Endothelial cell of umbilical vein (primary cell): ENCODE measurements at regions of chr7 and their contacts with region 1.

Region 1: GRCh38 chr7:28685644-28686417 is 272.3 kb downstream of the TRIL start:
- DNase-seq: peak; percentile 99
- H3K4me3 ChIP-seq: peak overlapping the region; percentile 45 to 94 (median 83)
- H3K27ac ChIP-seq: peak overlapping the region; percentile 97
- H3K4me1 ChIP-seq: peaks cover 29% of the 10 kb centered on the region
- H3K27me3 ChIP-seq: no peaks in the 10 kb centered on the region
- CTCF ChIP-seq: no peak
- POLR2A ChIP-seq: peak; percentile 75

Region 2: GRCh38 chr7:28298870-28299518 is 386.8 kb before region 1 on chr7:
- CTCF ChIA-PET with region 1: no interaction called
- POLR2A ChIA-PET with region 1: no interaction called
- dilution Hi-C with region 1: no loop called
- intact Hi-C with region 1: no loop called
- DNase-seq: peak; percentile 53
- H3K4me3 ChIP-seq: no peak overlapping the region
- H3K27ac ChIP-seq: no peak overlapping the region
- H3K4me1 ChIP-seq: no peaks in the 10 kb centered on the region
- H3K27me3 ChIP-seq: no peaks in the 10 kb centered on the region
- CTCF ChIP-seq: peak; percentile 36 to 48
- POLR2A ChIP-seq: no peak

Region 3: GRCh38 chr7:28378574-28379149 is 307.2 kb before region 1 on chr7:
- CTCF ChIA-PET with region 1: no interaction called
- POLR2A ChIA-PET with region 1: no interaction called
- dilution Hi-C with region 1: no loop called
- intact Hi-C with region 1: no loop called
- DNase-seq: no peak
- H3K4me3 ChIP-seq: no peak overlapping the region
- H3K27ac ChIP-seq: no peak overlapping the region
- H3K4me1 ChIP-seq: no peaks in the 10 kb centered on the region
- H3K27me3 ChIP-seq: no peaks in the 10 kb centered on the region
- CTCF ChIP-seq: no peak
- POLR2A ChIP-seq: no peak

Region 4: GRCh38 chr7:28389504-28390395 is 296.1 kb before region 1 on chr7:
- CTCF ChIA-PET with region 1: no interaction called
- POLR2A ChIA-PET with region 1: no interaction called
- dilution Hi-C with region 1: no loop called
- intact Hi-C with region 1: loop called (anchors 1 kb)
- DNase-seq: peak; percentile 76
- H3K4me3 ChIP-seq: peak overlapping the region in 2 of 3 experiments; percentile 1 to 54
- H3K27ac ChIP-seq: no peak overlapping the region
- H3K4me1 ChIP-seq: no peaks in the 10 kb centered on the region
- H3K27me3 ChIP-seq: peaks cover 10 to 13% of the 10 kb centered on the region in 2 experiments
- CTCF ChIP-seq: peak; percentile 39 to 41
- POLR2A ChIP-seq: no peak

Region 5: GRCh38 chr7:28509251-28510022 is 176.4 kb before region 1 on chr7:
- CTCF ChIA-PET with region 1: no interaction called
- POLR2A ChIA-PET with region 1: no interaction called
- dilution Hi-C with region 1: no loop called
- intact Hi-C with region 1: loop called (anchors 5 kb)
- DNase-seq: peak; percentile 73
- H3K4me3 ChIP-seq: peak overlapping the region in 2 of 3 experiments; percentile 8 to 27
- H3K27ac ChIP-seq: no peak overlapping the region
- H3K4me1 ChIP-seq: peaks cover 17% of the 10 kb centered on the region
- H3K27me3 ChIP-seq: no peaks in the 10 kb centered on the region
- CTCF ChIP-seq: no peak
- POLR2A ChIP-seq: no peak

Region 6: DNA sequence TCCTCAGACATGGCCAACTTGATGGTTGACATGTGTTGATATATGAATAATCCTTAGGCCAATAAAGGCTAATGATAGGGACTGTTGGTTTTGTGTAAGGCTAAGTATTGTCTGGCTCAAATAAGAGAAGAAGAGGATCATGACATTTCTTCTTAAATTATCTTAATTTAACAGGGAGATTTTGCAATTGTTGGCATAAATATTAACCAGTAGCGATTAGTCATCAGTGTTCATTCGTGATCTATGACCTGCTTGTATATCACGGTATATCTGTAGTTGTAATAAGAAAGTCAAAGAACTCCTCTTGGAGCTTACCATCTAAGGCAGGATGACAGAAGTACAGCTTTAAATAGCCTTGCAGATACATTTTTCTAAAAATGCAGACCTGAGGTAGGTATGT is 77.1 kb before region 1 on chr7:
- CTCF ChIA-PET with region 1: no interaction called
- POLR2A ChIA-PET with region 1: no interaction called
- dilution Hi-C with region 1: no loop called
- intact Hi-C with region 1: loop called (anchors 1 kb)
- DNase-seq: no peak
- H3K4me3 ChIP-seq: no peak overlapping the region
- H3K27ac ChIP-seq: no peak overlapping the region
- H3K4me1 ChIP-seq: peaks cover 27% of the 10 kb centered on the region
- H3K27me3 ChIP-seq: no peaks in the 10 kb centered on the region
- CTCF ChIP-seq: no peak
- POLR2A ChIP-seq: no peak

Region 7: DNA sequence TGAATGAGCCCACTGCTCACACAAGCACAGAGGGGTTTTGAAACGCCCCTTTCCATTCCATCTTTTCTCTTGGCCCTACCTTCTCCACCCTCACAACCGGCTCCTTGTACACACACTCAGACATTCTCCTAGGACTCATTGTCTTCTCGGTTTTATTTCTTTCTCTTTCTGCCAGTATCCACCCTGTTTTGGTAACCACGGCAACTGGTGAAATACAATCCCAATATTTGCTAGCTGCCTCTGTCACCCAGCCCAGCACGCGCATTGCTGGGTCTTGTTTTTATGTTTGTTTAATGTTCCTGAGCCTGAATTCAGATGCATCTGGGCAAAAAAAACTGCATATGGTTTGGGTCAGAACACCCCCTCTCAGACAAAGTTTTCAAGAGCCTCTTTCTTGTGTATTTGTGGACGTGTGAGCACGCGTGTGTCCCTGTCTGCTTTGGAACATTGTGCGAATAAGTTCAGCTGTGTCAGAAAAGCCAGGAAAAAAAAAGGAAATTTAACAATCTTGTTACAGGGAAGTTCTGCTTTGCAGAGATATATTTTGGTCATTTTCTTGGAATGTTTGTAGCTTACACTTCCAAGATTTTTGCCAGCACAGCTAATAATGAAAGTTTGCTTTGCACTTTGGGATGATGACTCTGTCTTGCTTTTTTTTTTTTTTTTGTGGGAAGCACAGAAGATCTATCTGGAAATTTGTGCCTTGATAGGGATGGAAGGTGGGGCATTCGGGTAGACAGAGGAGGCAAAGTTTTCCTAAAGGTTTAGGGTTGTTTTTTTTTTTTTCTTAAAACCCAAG is 46.4 kb after region 1 on chr7:
- CTCF ChIA-PET with region 1: no interaction called
- POLR2A ChIA-PET with region 1: no interaction called
- dilution Hi-C with region 1: no loop called
- intact Hi-C with region 1: loop called (anchors 1 kb)
- DNase-seq: peak; percentile 57
- H3K4me3 ChIP-seq: no peak overlapping the region
- H3K27ac ChIP-seq: no peak overlapping the region
- H3K4me1 ChIP-seq: peaks cover 3% of the 10 kb centered on the region
- H3K27me3 ChIP-seq: no peaks in the 10 kb centered on the region
- CTCF ChIP-seq: no peak
- POLR2A ChIP-seq: no peak

Region 8: DNA sequence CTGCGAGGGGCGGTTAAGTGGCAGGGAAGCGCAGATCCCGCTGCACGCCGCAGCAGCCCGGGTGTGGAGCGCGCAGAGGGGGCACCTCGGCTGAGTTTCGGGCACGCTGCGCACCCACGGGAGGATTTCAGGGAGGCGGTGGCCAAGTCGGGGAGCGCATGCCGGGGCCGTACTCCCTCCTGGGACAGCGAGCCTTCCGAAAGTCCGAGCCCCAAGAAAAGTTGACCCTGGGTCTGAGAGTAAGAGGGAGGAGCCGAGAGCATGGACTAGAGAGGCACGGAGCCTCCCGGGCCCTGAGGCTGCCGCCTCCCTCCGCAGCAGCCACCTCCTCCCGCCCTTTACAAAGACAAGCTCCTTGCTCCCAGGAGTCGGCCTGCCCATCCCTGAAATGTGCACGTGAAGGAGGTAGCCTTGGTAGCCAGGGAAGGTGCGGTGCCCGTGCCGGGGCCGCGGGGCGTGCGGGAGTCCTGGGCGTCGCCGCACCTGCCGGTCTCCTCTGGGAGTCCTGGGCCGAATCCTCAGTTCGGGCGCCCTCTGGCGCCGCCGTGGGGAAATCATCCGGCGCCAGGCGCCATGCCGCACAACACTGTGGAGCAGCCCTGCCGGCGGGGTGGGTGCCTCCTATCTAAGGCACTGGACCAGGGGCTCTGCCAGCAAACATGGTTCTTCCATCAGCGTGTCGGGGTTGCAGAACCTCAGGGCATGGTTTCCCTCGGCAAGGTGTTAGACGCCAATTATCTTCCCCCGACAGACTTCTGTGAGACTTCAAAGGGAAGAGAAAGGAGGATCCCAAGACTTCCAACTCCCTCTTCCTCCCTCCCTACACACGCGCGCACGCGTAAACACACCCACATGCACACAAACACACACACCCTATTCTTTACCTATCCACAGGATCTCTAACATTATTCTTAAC is 168.3 kb after region 1 on chr7:
- CTCF ChIA-PET with region 1: interaction called, 5 read pairs
- POLR2A ChIA-PET with region 1: no interaction called
- dilution Hi-C with region 1: no loop called
- intact Hi-C with region 1: loop called (anchors 5 kb)
- DNase-seq: peak; percentile 72
- H3K4me3 ChIP-seq: peak overlapping the region; percentile 4 to 40 (median 28)
- H3K27ac ChIP-seq: no peak overlapping the region
- H3K4me1 ChIP-seq: peaks cover 5% of the 10 kb centered on the region
- H3K27me3 ChIP-seq: peaks cover 21 to 34% of the 10 kb centered on the region in 2 experiments
- CTCF ChIP-seq: peak; percentile 87 to 94
- POLR2A ChIP-seq: no peak